Transverse colon (tissue), 4 donors: ENCODE measurements at regions of chr1 and their contacts with region 1.

Region 1: DNA sequence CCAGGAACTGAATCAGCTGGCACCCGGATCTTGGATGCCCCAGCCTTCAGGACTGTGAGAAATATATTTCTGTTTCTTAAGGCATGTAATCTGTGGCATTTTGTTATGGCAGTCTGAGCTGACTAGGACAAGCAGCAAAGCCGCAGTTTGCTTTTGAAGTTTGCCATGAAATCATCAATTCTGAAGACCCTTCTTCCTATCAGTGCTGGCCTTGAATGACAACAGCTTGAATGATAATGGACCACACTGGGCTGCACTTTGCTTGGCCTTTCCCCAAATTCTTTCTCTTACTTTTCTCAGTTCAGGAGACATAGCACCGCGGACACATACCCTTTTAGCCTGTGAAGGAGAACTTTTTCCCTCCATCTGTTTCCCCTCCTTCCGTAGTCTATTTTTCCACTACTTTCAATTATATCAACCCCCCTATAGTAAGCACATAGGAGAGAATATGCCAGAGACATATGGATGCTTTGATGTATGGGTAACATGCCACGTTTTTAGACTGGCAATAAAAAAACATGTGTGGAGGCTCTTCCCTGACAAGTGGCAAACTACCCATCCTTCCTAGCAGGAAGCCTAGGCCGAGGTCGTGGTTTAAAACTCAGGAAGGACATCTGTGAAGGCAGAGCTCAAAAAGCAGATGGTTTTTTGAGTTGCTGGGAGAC is 42.9 kb downstream of the HLX start:
- DNase-seq: no peak
- H3K4me3 ChIP-seq: no peak overlapping the region
- H3K27ac ChIP-seq: no peak overlapping the region
- H3K4me1 ChIP-seq: no peaks in the 10 kb centered on the region
- H3K27me3 ChIP-seq: no peaks in the 10 kb centered on the region
- CTCF ChIP-seq: no peak
- EP300 ChIP-seq: no peak
- POLR2A ChIP-seq: no peak

Region 2: GRCh38 chr1:220420726-220421125 is 501.4 kb before region 1 on chr1:
- in situ Hi-C with region 1: no loop called
- intact Hi-C with region 1: no loop called
- DNase-seq: no peak
- H3K4me3 ChIP-seq: no peak overlapping the region
- H3K27ac ChIP-seq: no peak overlapping the region
- H3K4me1 ChIP-seq: no peaks in the 10 kb centered on the region
- H3K27me3 ChIP-seq: no peaks in the 10 kb centered on the region
- CTCF ChIP-seq: no peak
- EP300 ChIP-seq: no peak
- POLR2A ChIP-seq: no peak

Region 3: GRCh38 chr1:220891224-220892085 is 30.6 kb before region 1 on chr1:
- in situ Hi-C with region 1: no loop called
- intact Hi-C with region 1: loop called (anchors 1 kb)
- DNase-seq: no peak
- H3K4me3 ChIP-seq: no peak overlapping the region
- H3K27ac ChIP-seq: no peak overlapping the region
- H3K4me1 ChIP-seq: peaks cover 0 to 11% (median 4%) of the 10 kb centered on the region in 4 donors
- H3K27me3 ChIP-seq: peaks cover 99% of the 10 kb centered on the region
- CTCF ChIP-seq: no peak
- EP300 ChIP-seq: no peak
- POLR2A ChIP-seq: no peak

Region 4: GRCh38 chr1:220958234-220958633 is 36.1 kb after region 1 on chr1:
- in situ Hi-C with region 1: no loop called
- intact Hi-C with region 1: loop called (anchors 2 kb)
- DNase-seq: no peak
- H3K4me3 ChIP-seq: no peak overlapping the region
- H3K27ac ChIP-seq: no peak overlapping the region
- H3K4me1 ChIP-seq: no peaks in the 10 kb centered on the region
- H3K27me3 ChIP-seq: no peaks in the 10 kb centered on the region
- CTCF ChIP-seq: no peak
- EP300 ChIP-seq: no peak
- POLR2A ChIP-seq: no peak

Region 5: GRCh38 chr1:220982686-220983085 is 60.6 kb after region 1 on chr1:
- in situ Hi-C with region 1: no loop called
- intact Hi-C with region 1: no loop called
- DNase-seq: no peak
- H3K4me3 ChIP-seq: no peak overlapping the region
- H3K27ac ChIP-seq: no peak overlapping the region
- H3K4me1 ChIP-seq: no peaks in the 10 kb centered on the region
- H3K27me3 ChIP-seq: no peaks in the 10 kb centered on the region
- CTCF ChIP-seq: no peak
- EP300 ChIP-seq: no peak
- POLR2A ChIP-seq: no peak

Region 6: GRCh38 chr1:221022346-221022745 is 100.2 kb after region 1 on chr1:
- in situ Hi-C with region 1: no loop called
- intact Hi-C with region 1: no loop called
- DNase-seq: no peak
- H3K4me3 ChIP-seq: no peak overlapping the region
- H3K27ac ChIP-seq: no peak overlapping the region
- H3K4me1 ChIP-seq: no peaks in the 10 kb centered on the region
- H3K27me3 ChIP-seq: no peaks in the 10 kb centered on the region
- CTCF ChIP-seq: no peak
- EP300 ChIP-seq: no peak
- POLR2A ChIP-seq: no peak